HEK293 (cell line): ENCODE measurements at regions of chr6 and their contacts with region 1.

Region 1: GRCh38 chr6:41367700-41368099 is 32.3 kb downstream of the NCR2 start:
- H3K4me3 ChIP-seq: no peak overlapping the region
- H3K27ac ChIP-seq: no peak overlapping the region
- H3K4me1 ChIP-seq: no peaks in the 10 kb centered on the region
- CTCF ChIP-seq: peak; percentile 90

Region 2: GRCh38 chr6:41247288-41247865 is 120.3 kb before region 1 on chr6:
- CTCF ChIA-PET with region 1: no interaction called
- POLR2A ChIA-PET with region 1: no interaction called
- H3K4me3 ChIP-seq: no peak overlapping the region
- H3K27ac ChIP-seq: no peak overlapping the region
- H3K4me1 ChIP-seq: no peaks in the 10 kb centered on the region
- CTCF ChIP-seq: no peak

Region 3: GRCh38 chr6:41344876-41345275 is 22.8 kb before region 1 on chr6:
- CTCF ChIA-PET with region 1: interaction called, 61 read pairs
- POLR2A ChIA-PET with region 1: no interaction called
- H3K4me3 ChIP-seq: no peak overlapping the region
- H3K27ac ChIP-seq: no peak overlapping the region
- H3K4me1 ChIP-seq: no peaks in the 10 kb centered on the region
- CTCF ChIP-seq: no peak

Region 4: DNA sequence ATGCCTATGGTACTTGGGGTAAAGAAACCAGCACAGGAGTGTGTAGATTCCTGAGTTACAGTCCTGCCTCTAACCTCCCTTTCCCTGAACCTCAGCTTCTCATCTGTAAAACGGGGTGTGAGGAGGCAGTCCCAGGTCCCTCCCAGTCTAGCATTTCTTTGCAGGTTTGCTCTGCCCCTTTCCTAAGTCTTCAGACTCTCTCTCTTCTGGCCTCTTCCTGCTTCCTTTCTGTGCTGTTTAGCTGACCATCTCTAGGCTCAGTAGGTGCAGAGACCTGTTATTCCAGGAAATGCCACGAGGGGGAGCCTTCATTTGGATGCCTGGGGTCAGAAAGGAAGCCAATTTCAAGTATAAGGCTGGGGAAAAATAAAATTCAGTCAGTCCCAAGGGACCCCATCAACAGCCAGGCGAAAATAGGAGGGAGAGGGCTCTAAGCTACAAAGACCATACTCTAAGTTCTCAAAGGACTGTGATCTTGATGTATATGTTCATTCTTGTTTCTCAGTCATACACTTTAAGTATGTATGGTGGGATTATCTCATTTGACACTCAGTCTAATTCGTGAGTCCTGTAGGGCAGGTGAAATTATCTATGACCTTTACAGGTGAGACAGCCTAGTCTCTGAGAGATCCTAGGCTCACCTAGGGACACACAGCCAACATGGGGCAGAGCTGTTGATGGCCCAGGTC is 56.8 kb after region 1 on chr6:
- CTCF ChIA-PET with region 1: interaction called, 66 read pairs
- POLR2A ChIA-PET with region 1: no interaction called
- H3K4me3 ChIP-seq: no peak overlapping the region
- H3K27ac ChIP-seq: no peak overlapping the region
- H3K4me1 ChIP-seq: peaks cover 5% of the 10 kb centered on the region; the same call in 1 of the 2 replicates
- CTCF ChIP-seq: peak; percentile 51

Region 5: DNA sequence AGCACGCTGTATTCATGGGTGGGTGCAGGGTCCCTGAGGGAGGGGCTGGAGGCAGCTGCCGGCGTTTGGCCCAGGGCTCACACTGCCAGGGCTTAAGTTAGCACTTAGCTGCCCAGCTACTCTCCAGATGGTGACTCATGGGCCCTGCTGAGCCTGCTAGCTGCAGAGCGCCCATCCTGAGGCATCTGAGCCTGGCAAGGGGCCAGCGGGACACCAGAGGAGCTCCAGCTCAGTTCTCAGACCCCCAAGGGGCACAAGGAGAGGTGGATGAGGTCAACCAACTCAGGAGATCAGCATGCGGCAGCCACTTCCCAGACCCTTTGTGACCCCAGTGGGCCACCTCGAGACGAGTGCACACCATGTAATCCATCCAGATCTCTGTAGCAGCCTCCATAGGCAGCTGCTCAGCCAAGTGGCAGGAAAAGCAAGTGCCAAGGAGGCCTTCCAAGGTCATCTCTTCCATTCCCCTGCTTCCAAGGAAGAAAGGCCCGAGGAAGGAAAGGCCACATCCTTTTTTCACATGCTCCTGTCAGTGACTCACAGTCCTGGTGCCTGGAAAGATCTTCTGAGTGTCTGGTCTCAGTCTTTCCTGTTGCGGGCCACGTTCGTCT is 213.8 kb after region 1 on chr6:
- CTCF ChIA-PET with region 1: interaction called, 122 read pairs
- POLR2A ChIA-PET with region 1: no interaction called
- H3K4me3 ChIP-seq: no peak overlapping the region
- H3K27ac ChIP-seq: no peak overlapping the region
- H3K4me1 ChIP-seq: peaks cover 18% of the 10 kb centered on the region
- CTCF ChIP-seq: no peak

Region 6: GRCh38 chr6:41615254-41615653 is 247.6 kb after region 1 on chr6:
- CTCF ChIA-PET with region 1: interaction called, 29 read pairs
- POLR2A ChIA-PET with region 1: no interaction called
- H3K4me3 ChIP-seq: no peak overlapping the region
- H3K27ac ChIP-seq: no peak overlapping the region
- H3K4me1 ChIP-seq: no peaks in the 10 kb centered on the region
- CTCF ChIP-seq: no peak

Region 7: GRCh38 chr6:41697861-41698781 is 330.4 kb after region 1 on chr6:
- CTCF ChIA-PET with region 1: interaction called, 19 read pairs
- POLR2A ChIA-PET with region 1: no interaction called
- H3K4me3 ChIP-seq: no peak overlapping the region
- H3K27ac ChIP-seq: no peak overlapping the region
- H3K4me1 ChIP-seq: no peaks in the 10 kb centered on the region
- CTCF ChIP-seq: no peak